SK-N-SH (cell line): ENCODE measurements at regions of chr6 and their contacts with region 1.

Region 1: GRCh38 chr6:37131104-37131959 is 38.6 kb upstream of the PIM1 start:
- DNase-seq: peak; percentile 85
- H3K4me3 ChIP-seq: no peak overlapping the region
- H3K27ac ChIP-seq: peak overlapping the region in 1 of 2 experiments; percentile 72; a peak in 2 of 4 replicates
- H3K4me1 ChIP-seq: peaks cover 18 to 30% of the 10 kb centered on the region in 2 experiments; a peak in 3 of 4 replicates
- H3K27me3 ChIP-seq: no peaks in the 10 kb centered on the region
- CTCF ChIP-seq: no peak
- EP300 ChIP-seq: no peak; a peak in 1 of 4 replicates
- RAD21 ChIP-seq: peak; percentile 60

Region 2: GRCh38 chr6:36985808-36986703 is 145.3 kb before region 1 on chr6 and contains the start of gene MTCH1:
- CTCF ChIA-PET with region 1: no interaction called
- POLR2A ChIA-PET with region 1: no interaction called
- DNase-seq: peak; percentile 98
- H3K4me3 ChIP-seq: peak within 1 kb of the TSS; percentile 93 to 95
- H3K27ac ChIP-seq: peak within 1 kb of the TSS; percentile 64 to 93
- H3K4me1 ChIP-seq: peaks cover 0 to 21% of the 10 kb centered on the region in 2 experiments; a peak in 2 of 4 replicates
- H3K27me3 ChIP-seq: no peaks in the 10 kb centered on the region; the same call in 1 of the 2 replicates
- CTCF ChIP-seq: no peak
- EP300 ChIP-seq: peak in 1 of 2 experiments; percentile 57; a peak in 1 of 4 replicates
- RAD21 ChIP-seq: no peak
- polyA plus RNA-seq, gene MTCH1: 137 and 151 TPM in 2 replicates

Region 3: GRCh38 chr6:37102279-37103168 is 28.8 kb before region 1 on chr6:
- CTCF ChIA-PET with region 1: no interaction called
- POLR2A ChIA-PET with region 1: interaction called, 12 read pairs
- DNase-seq: peak; percentile 94
- H3K4me3 ChIP-seq: peak overlapping the region; percentile 42 to 56
- H3K27ac ChIP-seq: peak overlapping the region; percentile 86 to 93
- H3K4me1 ChIP-seq: peaks cover 18 to 27% of the 10 kb centered on the region in 2 experiments
- H3K27me3 ChIP-seq: no peaks in the 10 kb centered on the region
- CTCF ChIP-seq: no peak
- EP300 ChIP-seq: peak in 1 of 2 experiments; percentile 48; a peak in 2 of 4 replicates
- RAD21 ChIP-seq: peak; percentile 28; the same call in 1 of the 2 replicates